GM10248 (cell line): ENCODE measurements at regions of chr16 and their contacts with region 1.

Region 1: GRCh38 chr16:66894948-66895688 is 14.8 kb downstream of the PDP2 start:
- DNase-seq: peak; percentile 78
- CTCF ChIP-seq: peak; percentile 87

Region 2: GRCh38 chr16:66774981-66775380 is 120.1 kb before region 1 on chr16:
- CTCF ChIA-PET with region 1: no interaction called
- POLR2A ChIA-PET with region 1: no interaction called
- DNase-seq: no peak
- CTCF ChIP-seq: no peak

Region 3: DNA sequence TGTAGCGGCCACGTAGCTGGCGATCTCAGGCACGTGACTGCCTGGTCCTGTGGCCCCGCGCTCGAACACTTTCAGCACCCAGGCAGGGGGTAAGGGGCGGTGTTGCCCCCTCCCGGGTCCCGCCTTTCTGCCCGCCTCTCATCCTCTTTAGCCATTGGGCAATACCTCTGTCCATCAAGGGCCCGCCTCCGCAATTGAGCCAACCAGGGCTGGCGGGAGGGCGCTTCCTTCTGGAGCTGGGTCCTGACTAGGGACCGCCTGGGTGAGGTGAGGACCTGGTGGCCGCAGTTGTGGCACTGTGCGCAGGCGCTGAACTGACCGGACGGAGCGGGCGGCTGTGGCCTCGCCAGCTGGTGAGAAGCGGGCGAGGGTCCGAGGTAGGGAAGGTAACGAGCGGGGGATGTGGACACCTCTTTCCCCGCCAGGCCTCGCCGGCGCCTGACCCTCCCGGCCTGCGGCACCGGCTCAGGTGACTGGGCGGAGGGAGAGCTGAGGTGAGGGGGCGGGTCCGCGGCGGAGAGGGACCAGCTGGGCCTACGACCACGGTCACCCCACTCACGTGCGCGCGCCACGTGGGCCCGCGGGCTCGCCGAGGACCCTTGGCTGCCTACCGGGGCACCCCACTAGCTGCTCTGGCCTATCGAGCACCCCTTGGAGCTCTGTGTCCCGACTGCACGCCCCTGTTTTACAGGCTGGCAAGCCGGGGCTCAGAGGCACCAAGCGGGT is 14.7 kb before region 1 on chr16 and contains the start of gene PDP2:
- CTCF ChIA-PET with region 1: interaction called, 31 read pairs
- POLR2A ChIA-PET with region 1: interaction called, 5 read pairs
- DNase-seq: peak; percentile 96
- CTCF ChIP-seq: no peak

Region 4: GRCh38 chr16:66911112-66911511 is 16.0 kb after region 1 on chr16:
- CTCF ChIA-PET with region 1: interaction called, 33 read pairs
- POLR2A ChIA-PET with region 1: no interaction called
- DNase-seq: no peak
- CTCF ChIP-seq: no peak

Region 5: DNA sequence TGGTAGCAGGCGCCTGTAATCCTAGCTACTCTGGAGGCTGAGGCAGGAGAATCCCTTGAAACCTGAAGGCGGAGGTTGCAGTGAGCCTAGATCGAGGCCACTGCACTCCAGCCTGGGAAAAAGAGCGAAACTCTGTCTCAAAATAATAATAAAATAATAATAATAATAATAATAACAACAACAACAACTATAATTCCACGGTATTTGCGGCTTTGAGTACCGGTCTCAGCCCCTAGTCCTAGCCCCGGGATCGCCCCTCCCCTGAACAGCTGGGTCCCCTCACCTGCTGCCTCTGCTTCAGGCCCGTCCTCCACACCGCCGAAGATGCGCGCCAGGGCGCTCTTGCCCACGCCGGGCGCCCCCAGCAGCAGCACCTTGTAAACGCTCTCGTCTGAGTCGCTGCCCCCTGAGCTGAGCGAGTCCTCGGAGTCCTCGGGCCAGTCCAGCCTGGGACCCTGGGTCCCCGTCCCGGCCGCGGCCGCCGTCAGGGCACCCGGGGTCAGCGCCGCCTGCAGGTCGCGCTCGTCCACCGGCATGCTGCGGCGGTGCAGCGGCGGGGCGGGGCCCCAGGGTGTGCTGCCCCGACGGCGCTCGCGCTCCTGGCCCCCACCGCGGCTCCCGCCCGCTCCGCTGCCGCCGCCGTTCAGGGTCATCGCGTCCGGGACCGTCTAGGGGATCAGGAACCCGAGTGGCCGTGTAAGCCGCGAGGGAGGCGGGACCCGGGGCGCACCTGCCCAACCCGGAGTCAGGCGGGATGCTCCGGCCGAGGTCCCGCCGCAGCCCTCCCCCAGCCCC is 29.6 kb after region 1 on chr16:
- CTCF ChIA-PET with region 1: interaction called, 115 read pairs
- POLR2A ChIA-PET with region 1: interaction called, 3 read pairs
- DNase-seq: peak; percentile 83
- CTCF ChIP-seq: peak; percentile 60

Region 6: GRCh38 chr16:66943426-66944053 is 48.4 kb after region 1 on chr16:
- CTCF ChIA-PET with region 1: interaction called, 10 read pairs
- POLR2A ChIA-PET with region 1: no interaction called
- DNase-seq: no peak
- CTCF ChIP-seq: no peak